ENCODE measurements at regions of chr15 and their contacts with region 1.

Region 1: GRCh38 chr15:88615303-88616107 is 5.6 kb upstream of the AEN start:
- DNase-seq: no peak
- H3K4me3 ChIP-seq: no peak overlapping the region
- H3K27ac ChIP-seq: no peak overlapping the region
- H3K4me1 ChIP-seq: peaks cover 0 to 8% (median 6%) of the 10 kb centered on the region in 4 experiments
- H3K27me3 ChIP-seq: peaks cover 0 to 3% (median 0%) of the 10 kb centered on the region in 5 experiments

Region 2: DNA sequence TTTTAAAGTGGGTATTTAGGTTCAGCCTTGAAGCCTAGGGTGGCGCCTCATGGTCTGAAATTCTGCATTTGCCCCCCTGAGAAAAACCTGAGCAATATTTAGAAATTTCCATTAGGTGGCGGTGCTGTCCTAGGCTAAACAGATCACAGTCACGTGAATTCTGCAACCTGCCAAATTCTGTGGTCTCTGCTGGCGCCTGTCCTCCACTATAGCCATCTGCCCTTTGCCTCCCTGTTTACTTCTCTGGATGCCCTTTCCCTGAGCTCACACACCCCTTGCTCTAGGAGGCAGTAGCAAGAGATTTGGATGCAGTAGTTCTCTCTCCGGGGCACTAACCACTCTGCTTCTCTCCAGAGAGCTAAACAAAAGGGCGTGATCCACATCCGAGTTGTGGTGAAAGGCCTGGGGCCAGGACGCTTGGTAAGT is 138.9 kb before region 1 on chr15:
- CTCF ChIA-PET with region 1: interaction called, 12 read pairs
- POLR2A ChIA-PET with region 1: no interaction called
- DNase-seq: peak; percentile 48 to 73 (median 62)
- H3K4me3 ChIP-seq: no peak overlapping the region
- H3K27ac ChIP-seq: no peak overlapping the region
- H3K4me1 ChIP-seq: no peaks in the 10 kb centered on the region
- H3K27me3 ChIP-seq: no peaks in the 10 kb centered on the region

Region 3: DNA sequence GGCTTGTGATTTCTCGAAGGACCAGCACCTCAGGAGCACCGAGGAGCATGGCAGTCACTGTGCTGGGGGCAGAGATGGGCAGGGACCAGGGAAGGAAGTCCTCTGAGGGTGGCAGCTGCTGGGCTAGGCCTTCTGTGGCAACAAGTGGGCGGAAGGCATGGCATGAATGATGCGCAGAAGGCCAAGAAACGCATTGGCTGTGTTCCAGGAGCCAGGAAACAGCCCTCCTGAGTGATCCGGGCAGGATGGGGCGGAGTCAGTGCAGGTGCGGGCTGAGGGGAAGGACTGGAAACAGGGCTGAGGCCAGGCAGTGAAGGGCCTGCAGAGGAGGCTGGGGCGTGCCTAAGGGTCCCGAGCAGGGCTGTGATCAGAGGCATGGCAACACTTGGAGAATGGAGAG is 124.3 kb before region 1 on chr15:
- CTCF ChIA-PET with region 1: no interaction called
- POLR2A ChIA-PET with region 1: no interaction called
- DNase-seq: peak in 1 of 3 donors; percentile 2
- H3K4me3 ChIP-seq: no peak overlapping the region
- H3K27ac ChIP-seq: no peak overlapping the region
- H3K4me1 ChIP-seq: peaks cover 0 to 4% (median 0%) of the 10 kb centered on the region in 4 experiments
- H3K27me3 ChIP-seq: no peaks in the 10 kb centered on the region

Region 4: DNA sequence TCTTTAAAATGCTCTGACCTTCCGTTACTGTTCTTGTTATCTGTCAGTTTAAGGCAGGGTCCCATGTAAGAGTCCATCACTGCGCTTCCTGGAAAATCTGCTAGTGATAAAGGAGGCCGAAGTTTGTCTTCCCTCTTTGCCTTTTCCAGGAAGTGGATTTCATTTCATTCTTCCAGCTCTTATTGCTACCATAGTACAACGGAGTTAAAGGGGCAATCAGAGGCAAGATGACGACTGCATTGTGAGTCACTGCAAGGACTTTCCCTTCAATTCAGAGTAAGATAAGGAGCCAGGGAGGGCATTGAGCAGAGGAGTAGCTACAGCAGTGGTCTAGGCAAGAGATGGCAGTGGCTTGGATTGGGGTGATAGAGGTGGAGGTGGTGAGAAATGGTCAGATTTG is 51.9 kb before region 1 on chr15:
- CTCF ChIA-PET with region 1: no interaction called
- POLR2A ChIA-PET with region 1: no interaction called
- DNase-seq: no peak
- H3K4me3 ChIP-seq: no peak overlapping the region
- H3K27ac ChIP-seq: no peak overlapping the region
- H3K4me1 ChIP-seq: no peaks in the 10 kb centered on the region
- H3K27me3 ChIP-seq: peaks cover 0 to 4% (median 0%) of the 10 kb centered on the region in 5 experiments

Measured in common myeloid progenitor, CD34-positive (primary cell).